ENCODE measurements at regions of chr16 and their contacts with region 1.

Region 1: GRCh38 chr16:56988948-56989945 is at the start of gene NLRC5:
- DNase-seq: peak; percentile 85 to 94 (median 87)
- H3K4me3 ChIP-seq: peak within 1 kb of the TSS; percentile 88
- H3K4me3 Mint-ChIP-seq: peak within 1 kb of the TSS; percentile 98 to 100 (median 99)
- H3K27ac ChIP-seq: peak within 1 kb of the TSS; percentile 81
- H3K27ac Mint-ChIP-seq: peak within 1 kb of the TSS; percentile 94 to 100 (median 98)
- H3K4me1 ChIP-seq: peaks cover 62% of the 10 kb centered on the region
- H3K4me1 Mint-ChIP-seq: peaks cover 68 to 83% (median 74%) of the 10 kb centered on the region in 3 donors
- H3K27me3 ChIP-seq: no peaks in the 10 kb centered on the region
- H3K27me3 Mint-ChIP-seq: no peaks in the 10 kb centered on the region
- total RNA-seq, gene NLRC5: 173 to 178 TPM

Region 2: DNA sequence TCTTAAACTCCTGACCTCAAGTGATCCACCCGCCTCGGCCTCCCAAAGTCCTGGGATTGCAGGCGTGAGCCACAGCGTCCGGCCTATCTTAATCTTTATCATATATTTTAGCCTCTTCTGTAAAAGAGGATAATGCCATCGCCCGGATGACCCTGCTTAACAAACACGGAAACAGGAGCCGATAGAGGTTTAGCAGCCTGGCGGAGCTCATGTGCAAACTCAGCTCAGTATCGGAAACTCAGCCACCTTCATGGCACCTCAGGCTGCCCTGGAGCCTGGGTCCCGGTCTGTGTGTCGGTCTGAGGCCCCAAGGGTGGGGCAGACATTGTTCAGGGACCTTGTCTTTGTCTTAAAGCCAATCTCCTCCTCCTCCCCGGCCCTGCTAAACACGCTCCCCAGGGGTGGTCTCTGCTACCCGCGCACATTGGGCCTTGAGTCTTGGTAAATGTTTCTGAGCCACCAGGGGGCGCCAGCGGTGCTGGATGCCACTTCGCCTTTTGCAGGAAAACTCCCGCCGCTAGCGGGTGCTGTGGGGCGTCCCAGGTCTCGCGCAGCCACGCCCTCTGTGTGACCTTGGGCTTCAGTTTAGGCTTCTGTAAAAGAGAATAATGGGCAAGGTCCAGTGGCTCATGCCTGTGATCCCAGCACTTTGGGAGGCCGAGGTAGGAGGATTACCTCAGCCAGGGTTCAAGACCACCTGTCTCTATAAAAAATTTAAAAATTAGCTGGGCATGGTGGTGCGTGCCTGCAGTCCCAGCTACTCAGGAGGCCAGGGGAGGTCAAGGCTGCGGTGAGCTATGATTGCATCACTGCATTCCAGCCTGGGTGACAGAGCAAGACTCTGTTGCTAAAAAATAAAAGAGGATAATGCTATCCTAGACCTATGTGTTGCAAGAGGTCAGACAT is 24.8 kb before region 1 on chr16:
- CTCF ChIA-PET with region 1: interaction called, 80 read pairs
- POLR2A ChIA-PET with region 1: interaction called, 6 read pairs
- DNase-seq: peak; percentile 87 to 96 (median 95)
- H3K4me3 ChIP-seq: no peak overlapping the region
- H3K4me3 Mint-ChIP-seq: peak overlapping the region in 1 of 7 donors; percentile 11
- H3K27ac ChIP-seq: no peak overlapping the region
- H3K27ac Mint-ChIP-seq: peak overlapping the region in 4 of 8 donors; percentile 31 to 87 (median 82)
- H3K4me1 ChIP-seq: peaks cover 21% of the 10 kb centered on the region
- H3K4me1 Mint-ChIP-seq: peaks cover 18 to 31% (median 21%) of the 10 kb centered on the region in 3 donors
- H3K27me3 ChIP-seq: no peaks in the 10 kb centered on the region
- H3K27me3 Mint-ChIP-seq: peaks cover 0 to 1% of the 10 kb centered on the region in 2 donors

Region 3: DNA sequence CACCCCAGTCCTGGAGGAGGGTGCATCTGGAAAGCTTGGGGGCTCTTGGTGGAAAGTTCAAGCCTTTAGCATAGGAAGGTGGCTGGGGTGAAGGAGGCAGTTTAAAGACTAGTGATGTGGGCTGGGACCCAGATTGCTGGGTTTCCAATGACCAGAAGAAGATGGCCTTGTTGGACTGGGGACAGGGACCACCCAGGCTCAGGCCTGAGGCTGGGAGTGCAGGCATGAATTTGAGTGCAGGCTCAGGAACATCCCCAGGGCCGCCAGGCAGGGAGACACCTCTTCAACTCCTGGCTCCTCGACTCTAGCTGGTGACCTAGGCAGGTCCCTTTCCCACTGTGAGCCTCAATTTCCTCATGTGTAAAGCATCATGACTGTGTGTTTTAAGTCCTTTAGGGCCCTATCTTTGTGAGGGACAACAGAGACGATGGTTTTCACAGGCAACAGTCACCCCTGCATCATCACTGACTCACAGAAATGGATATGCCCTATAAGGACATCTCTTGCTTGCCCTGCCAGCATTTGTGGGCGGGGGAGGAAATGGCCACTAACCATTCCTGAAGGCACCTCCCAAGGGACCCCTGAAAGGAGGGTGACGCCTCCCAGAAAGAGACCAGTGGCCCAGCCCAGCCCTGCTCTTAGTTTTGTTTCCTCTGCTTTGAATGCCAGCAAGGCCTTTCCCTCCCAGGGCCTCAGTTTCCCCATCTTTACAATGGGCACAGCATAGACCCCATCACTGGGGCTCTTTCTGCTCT is 11.2 kb after region 1 on chr16:
- CTCF ChIA-PET with region 1: interaction called, 19 read pairs
- POLR2A ChIA-PET with region 1: interaction called, 22 read pairs
- DNase-seq: peak in 3 of 5 donors; percentile 39 to 74 (median 39)
- H3K4me3 ChIP-seq: peak overlapping the region; percentile 52
- H3K4me3 Mint-ChIP-seq: peak overlapping the region; percentile 74 to 87 (median 79)
- H3K27ac ChIP-seq: peak overlapping the region; percentile 71
- H3K27ac Mint-ChIP-seq: peak overlapping the region; percentile 90 to 99 (median 96)
- H3K4me1 ChIP-seq: peaks cover 94% of the 10 kb centered on the region
- H3K4me1 Mint-ChIP-seq: peaks cover 97 to 100% (median 99%) of the 10 kb centered on the region in 3 donors
- H3K27me3 ChIP-seq: no peaks in the 10 kb centered on the region
- H3K27me3 Mint-ChIP-seq: no peaks in the 10 kb centered on the region

Region 4: DNA sequence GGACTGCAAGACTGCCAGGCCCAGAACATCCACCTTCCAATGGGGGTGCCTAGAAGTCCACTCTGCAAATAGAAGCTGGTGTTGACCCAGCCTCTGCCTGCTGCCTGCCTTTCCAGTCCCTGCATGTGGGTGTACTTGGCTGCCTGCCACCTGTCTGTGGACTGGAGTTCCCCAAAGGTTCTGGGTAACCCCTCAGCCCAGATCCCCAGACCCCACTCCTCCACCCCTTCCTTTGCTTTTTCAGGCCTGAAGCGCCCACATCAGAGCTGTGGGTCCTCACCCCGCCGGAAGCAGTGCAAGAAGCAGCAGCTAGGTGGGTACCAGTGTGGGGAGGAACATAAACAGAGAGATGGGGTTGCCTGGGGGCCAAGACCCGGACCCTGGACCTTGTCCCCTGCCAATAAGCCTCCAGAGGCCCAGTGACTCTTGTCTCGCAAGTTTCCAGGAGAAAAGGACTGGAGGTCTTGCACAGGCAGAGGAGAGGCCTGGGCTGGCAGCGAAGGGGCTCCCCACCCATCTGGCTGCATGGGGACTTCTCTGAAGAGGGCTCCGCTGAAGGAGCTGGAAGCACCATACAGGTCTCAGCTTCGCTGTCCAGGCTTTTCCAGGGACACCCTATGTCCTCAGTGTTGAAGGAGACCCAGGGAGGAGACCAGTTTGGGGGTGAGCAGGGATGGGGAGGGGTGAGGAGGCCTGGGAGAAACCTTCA is 34.4 kb after region 1 on chr16:
- CTCF ChIA-PET with region 1: interaction called, 11 read pairs
- POLR2A ChIA-PET with region 1: interaction called, 27 read pairs
- DNase-seq: peak; percentile 57 to 91 (median 86)
- H3K4me3 ChIP-seq: peak overlapping the region; percentile 36
- H3K4me3 Mint-ChIP-seq: peak overlapping the region; percentile 60 to 89 (median 76)
- H3K27ac ChIP-seq: no peak overlapping the region
- H3K27ac Mint-ChIP-seq: peak overlapping the region; percentile 79 to 94 (median 92)
- H3K4me1 ChIP-seq: peaks cover 87% of the 10 kb centered on the region
- H3K4me1 Mint-ChIP-seq: peaks cover 87 to 95% (median 94%) of the 10 kb centered on the region in 3 donors
- H3K27me3 ChIP-seq: no peaks in the 10 kb centered on the region
- H3K27me3 Mint-ChIP-seq: peaks cover 0 to 1% of the 10 kb centered on the region in 2 donors

Region 5: DNA sequence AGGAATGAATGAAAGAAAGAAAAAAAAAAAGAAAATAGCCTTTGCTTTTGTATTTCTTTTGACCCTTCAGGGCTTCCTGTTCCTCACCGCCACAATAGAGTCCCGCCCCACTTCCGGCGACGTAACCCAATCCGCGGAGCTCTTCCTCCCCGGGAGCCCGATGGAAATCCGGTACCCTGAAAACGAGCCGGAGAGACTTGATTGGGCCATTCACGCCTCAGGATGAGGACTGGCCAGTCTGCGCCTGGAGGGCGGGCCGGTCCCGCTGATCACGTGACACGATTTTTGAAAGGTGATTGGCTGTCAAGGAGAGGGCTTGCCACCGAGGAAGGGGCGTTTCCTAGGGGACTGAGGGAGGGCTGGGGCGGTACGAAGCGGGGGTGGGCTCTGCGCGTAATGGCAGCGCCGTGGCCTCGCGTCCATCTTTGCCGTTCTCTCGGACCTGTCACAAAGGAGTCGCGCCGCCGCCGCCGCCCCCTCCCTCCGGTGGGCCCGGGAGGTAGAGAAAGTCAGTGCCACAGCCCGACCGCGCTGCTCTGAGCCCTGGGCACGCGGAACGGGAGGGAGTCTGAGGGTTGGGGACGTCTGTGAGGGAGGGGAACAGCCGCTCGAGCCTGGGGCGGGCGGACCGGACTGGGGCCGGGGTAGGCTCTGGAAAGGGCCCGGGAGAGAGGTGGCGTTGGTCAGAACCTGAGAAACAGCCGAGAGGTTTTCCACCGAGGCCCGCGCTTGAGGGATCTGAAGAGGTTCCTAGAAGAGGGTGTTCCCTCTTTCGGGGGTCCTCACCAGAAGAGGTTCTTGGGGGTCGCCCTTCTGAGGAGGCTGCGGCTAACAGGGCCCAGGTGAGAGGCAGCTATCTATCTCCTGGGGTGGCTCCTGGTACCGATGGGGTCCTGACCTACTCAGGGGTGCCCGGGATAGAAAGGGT is 197.0 kb after region 1 on chr16 and contains the starts of genes PSME3IP1 and RSPRY1:
- CTCF ChIA-PET with region 1: no interaction called
- POLR2A ChIA-PET with region 1: interaction called, 17 read pairs
- DNase-seq: peak; percentile 95 to 100 (median 99)
- H3K4me3 ChIP-seq: peak within 1 kb of the TSS; percentile 85
- H3K4me3 Mint-ChIP-seq: peak within 1 kb of the TSS; percentile 92 to 98 (median 94)
- H3K27ac ChIP-seq: peak within 1 kb of the TSS; percentile 83
- H3K27ac Mint-ChIP-seq: peak within 1 kb of the TSS; percentile 91 to 98 (median 95)
- H3K4me1 ChIP-seq: peaks cover 21% of the 10 kb centered on the region
- H3K4me1 Mint-ChIP-seq: peaks cover 48 to 76% (median 59%) of the 10 kb centered on the region in 3 donors
- H3K27me3 ChIP-seq: no peaks in the 10 kb centered on the region
- H3K27me3 Mint-ChIP-seq: peaks cover 0 to 3% of the 10 kb centered on the region in 2 donors
- total RNA-seq, gene PSME3IP1: 103 to 111 TPM
- total RNA-seq, gene RSPRY1: 33.3 to 36.6 TPM